Left colon (tissue), 2 donors: ENCODE measurements at regions of chr14 and their contacts with region 1.

Region 1: GRCh38 chr14:50085570-50086320 is 30.6 kb downstream of the VCPKMT start:
- DNase-seq: no peak
- ATAC-seq: no peak

Region 2: DNA sequence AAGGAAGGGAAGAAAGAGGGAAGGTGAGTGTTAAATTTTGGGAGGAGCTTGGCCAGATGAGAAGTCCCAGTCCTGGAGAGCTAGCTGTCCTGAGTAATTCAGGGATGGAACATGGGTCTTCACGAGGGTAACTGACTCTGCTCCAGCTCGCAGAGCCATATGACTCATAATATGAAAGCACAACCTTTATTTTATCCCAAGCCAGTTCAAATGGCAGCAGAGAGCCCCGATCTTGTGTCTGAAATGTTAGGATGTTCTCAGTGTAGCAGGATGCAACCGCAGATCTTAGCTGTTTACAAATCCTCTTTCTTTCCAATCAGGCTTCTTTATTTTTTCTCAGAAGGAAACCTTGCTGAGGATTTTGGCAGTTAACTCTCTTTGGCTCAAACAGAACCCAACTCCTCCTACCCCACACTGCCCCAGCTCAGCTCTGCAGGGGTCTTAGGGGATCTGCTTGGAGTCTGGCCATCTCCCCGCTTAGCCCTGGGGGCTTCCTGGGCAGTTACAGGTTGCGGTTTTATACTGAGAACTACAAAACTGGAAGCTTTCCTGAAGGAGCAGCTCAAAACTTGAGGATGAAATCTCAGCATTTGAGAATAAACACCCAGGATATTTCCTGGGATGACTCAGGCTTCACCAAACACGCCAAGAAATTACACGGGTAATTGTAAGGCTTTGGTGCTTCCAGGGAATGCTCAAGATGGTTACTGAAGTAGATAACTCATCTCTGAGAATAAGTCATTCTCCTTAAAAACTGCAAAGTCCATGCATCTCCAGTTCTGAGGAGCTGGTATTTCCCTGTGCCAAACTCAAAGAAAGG is 61.9 kb before region 1 on chr14:
- intact Hi-C with region 1: loop called in 1 of 2 experiments (anchors 10 kb)
- DNase-seq: no peak
- ATAC-seq: no peak